ENCODE measurements at regions of chr2 and their contacts with region 1.

Region 1: DNA sequence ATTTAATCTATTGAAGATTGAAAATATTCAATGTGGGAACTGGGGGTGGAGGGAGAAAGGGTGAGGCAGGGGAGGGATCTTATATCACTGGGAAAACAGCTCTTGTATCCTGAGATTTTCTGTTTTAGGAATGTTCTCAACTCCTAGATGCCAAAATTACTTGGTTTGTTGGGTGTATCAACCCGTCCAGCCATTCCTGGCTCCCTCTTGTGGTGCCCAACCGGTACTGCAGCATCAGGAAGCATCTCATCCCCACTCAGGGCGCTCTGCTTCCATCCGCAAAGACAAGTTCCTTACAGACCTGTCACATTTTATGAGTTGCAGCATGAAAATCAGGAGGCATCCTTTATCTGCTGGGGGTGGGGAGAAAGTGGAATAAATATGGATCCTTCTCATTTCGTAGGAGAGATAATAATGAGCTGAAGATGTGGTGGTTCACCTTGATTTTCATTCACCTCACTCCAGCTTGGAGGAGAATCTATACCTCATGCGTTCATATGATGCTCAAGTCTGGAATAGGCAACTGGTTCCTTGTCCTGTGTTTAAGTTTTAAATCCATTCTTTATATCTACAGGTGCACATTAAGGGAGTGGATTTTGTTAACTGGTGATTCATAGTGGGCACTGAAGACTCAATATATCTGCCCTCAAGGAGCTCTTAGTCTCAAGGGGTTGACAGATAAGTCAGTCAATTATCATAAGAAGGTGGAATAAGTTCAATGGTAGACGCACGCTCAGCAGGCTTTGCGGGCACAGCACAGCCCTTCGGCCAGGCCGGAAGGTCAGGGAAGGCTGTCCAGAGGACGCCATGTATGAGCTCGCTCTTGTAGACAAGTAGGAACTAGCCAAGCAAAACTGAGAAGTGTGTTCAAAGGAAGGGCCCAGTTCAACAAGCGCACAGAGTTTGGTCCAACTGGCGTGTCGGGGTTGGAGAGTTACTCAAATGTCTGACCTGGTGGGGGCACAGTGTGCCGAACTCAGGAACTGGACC is 127.3 kb downstream of the RNF144A start:
- DNase-seq: peak; percentile 81
- H3K4me3 ChIP-seq: no peak overlapping the region
- H3K27ac ChIP-seq: no peak overlapping the region; a peak in 1 of 4 replicates
- H3K4me1 ChIP-seq: peaks cover 0 to 3% of the 10 kb centered on the region in 2 experiments; a peak in 1 of 4 replicates
- H3K27me3 ChIP-seq: no peaks in the 10 kb centered on the region
- CTCF ChIP-seq: peak; percentile 98
- EP300 ChIP-seq: no peak
- RAD21 ChIP-seq: peak; percentile 75

Region 2: GRCh38 chr2:6556755-6557154 is 487.8 kb before region 1 on chr2:
- CTCF ChIA-PET with region 1: no interaction called
- POLR2A ChIA-PET with region 1: no interaction called
- DNase-seq: no peak
- H3K4me3 ChIP-seq: no peak overlapping the region
- H3K27ac ChIP-seq: no peak overlapping the region
- H3K4me1 ChIP-seq: no peaks in the 10 kb centered on the region
- H3K27me3 ChIP-seq: no peaks in the 10 kb centered on the region
- CTCF ChIP-seq: no peak
- EP300 ChIP-seq: no peak
- RAD21 ChIP-seq: no peak

Region 3: DNA sequence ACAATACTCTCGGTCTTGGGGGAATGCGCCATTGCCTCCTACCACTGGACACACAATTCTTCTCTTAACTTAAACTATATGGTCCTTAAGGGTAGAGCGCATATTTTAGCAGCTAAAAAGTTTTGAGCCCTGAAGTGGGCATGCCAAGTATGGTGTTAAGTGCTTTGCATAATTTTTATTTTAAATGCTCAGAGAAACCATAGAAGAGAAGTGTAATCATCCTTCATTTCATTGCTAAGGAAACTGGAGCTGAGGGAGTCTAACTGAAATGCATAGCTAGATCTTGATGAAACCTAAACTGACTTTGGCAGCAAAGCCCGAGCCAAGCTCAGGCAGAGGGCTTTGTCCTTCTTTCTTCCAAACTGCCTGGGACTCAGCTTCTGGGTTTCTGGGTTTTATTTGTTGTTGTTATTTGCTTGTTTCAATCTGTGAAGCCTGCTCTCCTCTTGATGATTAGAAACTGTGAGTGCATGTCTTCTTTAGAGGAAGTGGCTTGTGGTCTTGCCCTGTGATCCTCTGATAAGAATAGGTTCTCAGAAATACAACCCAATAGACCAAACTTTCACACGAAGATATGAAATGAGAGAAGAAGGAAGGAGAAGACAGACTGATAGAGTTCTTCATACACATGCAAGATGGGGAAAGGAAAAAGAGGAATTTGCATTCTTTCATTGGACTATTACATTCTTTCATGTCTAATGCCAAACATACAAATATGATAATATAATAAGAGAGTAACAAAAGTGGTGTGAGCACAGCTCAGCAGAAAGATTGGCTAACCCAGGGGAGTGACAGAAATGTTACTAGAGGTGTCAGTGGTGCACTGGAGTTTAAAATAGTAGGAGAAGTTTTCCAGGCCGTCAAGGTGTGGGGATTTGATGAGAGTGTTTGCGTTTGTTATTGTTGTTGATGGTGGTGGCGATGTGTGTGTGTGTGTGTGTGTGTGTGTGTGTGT is 134.8 kb before region 1 on chr2:
- CTCF ChIA-PET with region 1: interaction called, 37 read pairs
- POLR2A ChIA-PET with region 1: no interaction called
- DNase-seq: no peak
- H3K4me3 ChIP-seq: no peak overlapping the region
- H3K27ac ChIP-seq: no peak overlapping the region
- H3K4me1 ChIP-seq: no peaks in the 10 kb centered on the region; a peak in 1 of 4 replicates
- H3K27me3 ChIP-seq: no peaks in the 10 kb centered on the region
- CTCF ChIP-seq: no peak
- EP300 ChIP-seq: no peak
- RAD21 ChIP-seq: no peak

Region 4: GRCh38 chr2:7014174-7014640 is 30.3 kb before region 1 on chr2:
- CTCF ChIA-PET with region 1: interaction called, 26 read pairs
- POLR2A ChIA-PET with region 1: no interaction called
- DNase-seq: peak; percentile 63
- H3K4me3 ChIP-seq: peak overlapping the region in 1 of 2 experiments; percentile 3; a peak in 1 of 4 replicates
- H3K27ac ChIP-seq: peak overlapping the region; percentile 99
- H3K4me1 ChIP-seq: peaks cover 46 to 94% of the 10 kb centered on the region in 2 experiments
- H3K27me3 ChIP-seq: no peaks in the 10 kb centered on the region
- CTCF ChIP-seq: peak; percentile 80
- EP300 ChIP-seq: no peak
- RAD21 ChIP-seq: peak; percentile 71

Region 5: GRCh38 chr2:7031547-7032245 is 12.9 kb before region 1 on chr2:
- CTCF ChIA-PET with region 1: interaction called, 40 read pairs
- POLR2A ChIA-PET with region 1: no interaction called
- DNase-seq: no peak
- H3K4me3 ChIP-seq: no peak overlapping the region
- H3K27ac ChIP-seq: no peak overlapping the region
- H3K4me1 ChIP-seq: peaks cover 0 to 22% of the 10 kb centered on the region in 2 experiments; a peak in 1 of 4 replicates
- H3K27me3 ChIP-seq: no peaks in the 10 kb centered on the region
- CTCF ChIP-seq: no peak
- EP300 ChIP-seq: no peak
- RAD21 ChIP-seq: no peak

Region 6: DNA sequence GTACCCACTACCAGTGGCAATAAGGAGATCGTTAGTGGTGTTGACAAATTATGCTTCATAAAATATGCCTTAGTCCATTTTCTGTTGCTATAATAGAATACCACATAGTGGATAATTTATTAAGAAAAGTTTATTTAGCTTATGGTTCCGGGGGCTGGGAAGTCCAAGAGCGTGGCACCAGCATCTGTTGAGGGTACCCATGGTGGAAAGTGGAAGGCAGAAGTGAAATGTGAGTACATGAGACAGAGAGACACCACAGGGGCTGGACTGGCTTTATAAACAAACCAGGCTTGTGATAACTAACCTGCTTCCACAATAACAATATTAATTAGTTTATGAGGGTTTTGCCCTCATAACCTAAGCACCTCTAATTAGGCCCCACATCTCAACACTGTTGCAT is 19.2 kb after region 1 on chr2:
- CTCF ChIA-PET with region 1: interaction called, 46 read pairs
- POLR2A ChIA-PET with region 1: no interaction called
- DNase-seq: no peak
- H3K4me3 ChIP-seq: no peak overlapping the region
- H3K27ac ChIP-seq: no peak overlapping the region; a peak in 1 of 4 replicates
- H3K4me1 ChIP-seq: peaks cover 0 to 34% of the 10 kb centered on the region in 2 experiments; a peak in 2 of 4 replicates
- H3K27me3 ChIP-seq: no peaks in the 10 kb centered on the region
- CTCF ChIP-seq: no peak
- EP300 ChIP-seq: no peak
- RAD21 ChIP-seq: no peak

Region 7: GRCh38 chr2:7083577-7084509 is 39.3 kb after region 1 on chr2:
- CTCF ChIA-PET with region 1: interaction called, 13 read pairs
- POLR2A ChIA-PET with region 1: no interaction called
- DNase-seq: no peak
- H3K4me3 ChIP-seq: no peak overlapping the region; a peak in 1 of 4 replicates
- H3K27ac ChIP-seq: no peak overlapping the region
- H3K4me1 ChIP-seq: no peaks in the 10 kb centered on the region
- H3K27me3 ChIP-seq: no peaks in the 10 kb centered on the region
- CTCF ChIP-seq: peak; percentile 58
- EP300 ChIP-seq: no peak
- RAD21 ChIP-seq: peak; percentile 71

Region 8: DNA sequence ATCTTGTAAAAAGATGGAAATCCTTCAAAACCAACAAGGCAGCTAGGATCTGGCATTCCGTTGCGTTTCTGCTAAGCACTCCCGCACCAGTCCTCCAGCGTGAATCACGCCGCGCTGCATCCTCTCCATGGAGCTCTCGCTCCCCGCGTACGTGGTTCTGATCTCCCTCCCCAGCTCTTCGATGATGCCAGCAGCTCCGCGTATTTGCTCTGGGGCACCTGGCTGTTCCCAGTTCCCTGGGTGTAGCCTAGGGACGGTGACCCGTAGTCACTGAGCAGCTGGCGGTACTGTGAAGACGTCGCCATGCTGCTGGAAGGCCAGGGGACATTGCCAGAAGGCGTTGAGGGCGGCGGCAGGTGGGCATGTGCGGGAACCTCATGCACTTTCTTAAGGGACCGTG is 280.1 kb after region 1 on chr2:
- CTCF ChIA-PET with region 1: no interaction called
- POLR2A ChIA-PET with region 1: no interaction called
- DNase-seq: no peak
- H3K4me3 ChIP-seq: no peak overlapping the region
- H3K27ac ChIP-seq: no peak overlapping the region
- H3K4me1 ChIP-seq: no peaks in the 10 kb centered on the region; a peak in 1 of 4 replicates
- H3K27me3 ChIP-seq: no peaks in the 10 kb centered on the region
- CTCF ChIP-seq: no peak
- EP300 ChIP-seq: no peak
- RAD21 ChIP-seq: no peak